ENCODE measurements at regions of chr1 and their contacts with region 1.

Region 1: GRCh38 chr1:94061513-94062443 is 59.2 kb downstream of the ABCA4 start:
- DNase-seq: peak; percentile 54
- ATAC-seq: peak; percentile 80
- H3K4me3 Mint-ChIP-seq: no peak overlapping the region
- H3K27ac Mint-ChIP-seq: no peak overlapping the region
- H3K4me1 Mint-ChIP-seq: no peaks in the 10 kb centered on the region
- H3K27me3 Mint-ChIP-seq: peaks cover 23% of the 10 kb centered on the region

Region 2: DNA sequence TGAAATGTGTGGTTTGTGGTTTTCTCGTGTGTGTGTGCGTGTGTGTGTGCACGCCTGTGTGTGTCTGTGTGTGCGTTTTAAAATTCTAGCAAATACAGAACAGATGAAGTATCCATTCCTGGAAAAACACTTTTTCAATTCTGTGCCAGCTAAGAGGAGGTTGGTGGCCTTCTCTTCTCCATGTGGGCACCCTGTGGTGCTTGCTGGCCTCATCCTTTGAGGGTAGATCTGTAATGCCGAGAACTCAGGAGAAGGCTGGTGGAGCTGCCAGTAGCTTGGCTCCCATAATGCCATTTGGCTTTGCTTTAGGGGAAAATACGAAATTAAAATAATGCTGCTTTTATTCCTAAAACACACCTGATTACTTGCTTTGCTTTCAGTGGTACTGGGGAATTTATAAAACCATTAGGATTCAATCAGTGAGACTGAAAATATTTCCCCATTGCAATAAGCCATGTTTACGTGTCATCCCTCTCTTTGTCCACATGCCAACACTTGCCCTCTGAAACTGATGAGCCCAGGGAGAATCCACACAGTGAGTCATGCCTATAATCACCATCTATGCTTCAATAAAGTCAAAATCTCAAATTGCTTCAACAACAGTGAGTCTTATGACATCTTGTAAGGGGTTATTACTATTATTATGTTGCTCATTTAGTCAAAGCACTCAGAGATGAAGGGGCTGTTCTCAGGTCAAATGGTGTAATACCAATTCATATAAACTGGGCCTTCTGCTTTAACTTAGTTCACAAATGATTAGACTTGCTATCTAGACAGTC is 20.0 kb after region 1 on chr1:
- CTCF ChIA-PET with region 1: interaction called, 10 read pairs
- POLR2A ChIA-PET with region 1: no interaction called
- DNase-seq: no peak
- ATAC-seq: no peak
- H3K4me3 Mint-ChIP-seq: no peak overlapping the region
- H3K27ac Mint-ChIP-seq: no peak overlapping the region
- H3K4me1 Mint-ChIP-seq: peaks cover 11% of the 10 kb centered on the region
- H3K27me3 Mint-ChIP-seq: peaks cover 28% of the 10 kb centered on the region

Region 3: DNA sequence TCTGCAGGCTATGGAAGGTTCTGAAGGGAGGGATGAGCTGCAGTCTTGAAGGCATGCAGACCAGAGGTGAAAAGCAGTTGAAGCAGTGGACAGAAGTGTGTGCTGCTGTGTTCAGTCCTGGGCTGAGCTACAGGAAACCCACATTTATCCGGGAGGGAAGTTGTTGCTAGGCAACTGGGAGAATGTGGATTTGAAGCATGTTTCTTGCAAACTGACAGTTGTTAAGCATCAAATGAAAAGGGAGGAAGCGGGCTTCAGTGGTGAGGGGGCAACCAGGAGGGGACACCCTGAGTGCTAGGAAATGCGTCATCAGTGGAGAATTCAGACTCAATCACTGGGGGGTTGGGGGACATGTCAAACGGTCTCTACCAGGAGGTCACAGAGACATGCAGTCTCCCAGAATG is 30.4 kb after region 1 on chr1:
- CTCF ChIA-PET with region 1: interaction called, 11 read pairs
- POLR2A ChIA-PET with region 1: no interaction called
- DNase-seq: peak; percentile 66
- ATAC-seq: peak; percentile 86
- H3K4me3 Mint-ChIP-seq: peak overlapping the region; percentile 13
- H3K27ac Mint-ChIP-seq: peak overlapping the region; percentile 79
- H3K4me1 Mint-ChIP-seq: peaks cover 43% of the 10 kb centered on the region
- H3K27me3 Mint-ChIP-seq: no peaks in the 10 kb centered on the region

Region 4: DNA sequence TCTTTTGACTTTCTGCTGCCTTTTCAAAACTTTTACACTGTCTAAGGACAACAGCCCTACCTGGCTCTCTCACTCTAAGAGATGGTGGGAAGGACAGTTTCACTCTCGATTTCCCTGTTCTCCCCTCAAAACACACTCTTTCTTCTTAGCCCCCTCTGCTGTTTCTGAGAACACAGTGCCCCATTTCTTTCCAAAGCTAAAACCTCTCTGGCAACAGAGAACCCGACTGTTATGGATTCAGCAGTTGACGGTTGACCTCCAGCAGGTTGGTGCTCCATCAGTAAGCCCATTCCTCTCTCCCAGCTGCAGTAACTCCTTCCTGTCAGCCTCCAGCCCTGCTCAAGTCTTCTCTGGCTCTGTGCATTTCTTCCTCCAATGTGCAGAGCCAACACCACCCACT is 268.2 kb after region 1 on chr1:
- CTCF ChIA-PET with region 1: interaction called, 64 read pairs
- POLR2A ChIA-PET with region 1: no interaction called
- DNase-seq: no peak
- ATAC-seq: no peak
- H3K4me3 Mint-ChIP-seq: no peak overlapping the region
- H3K27ac Mint-ChIP-seq: no peak overlapping the region
- H3K4me1 Mint-ChIP-seq: peaks cover 7% of the 10 kb centered on the region
- H3K27me3 Mint-ChIP-seq: peaks cover 25% of the 10 kb centered on the region

Region 5: GRCh38 chr1:94335950-94336349 is 274.2 kb after region 1 on chr1:
- CTCF ChIA-PET with region 1: interaction called, 64 read pairs
- POLR2A ChIA-PET with region 1: no interaction called
- DNase-seq: peak; percentile 50
- ATAC-seq: no peak
- H3K4me3 Mint-ChIP-seq: no peak overlapping the region
- H3K27ac Mint-ChIP-seq: no peak overlapping the region
- H3K4me1 Mint-ChIP-seq: no peaks in the 10 kb centered on the region
- H3K27me3 Mint-ChIP-seq: peaks cover 9% of the 10 kb centered on the region

Region 6: GRCh38 chr1:94379615-94380014 is 317.8 kb after region 1 on chr1:
- CTCF ChIA-PET with region 1: no interaction called
- POLR2A ChIA-PET with region 1: no interaction called
- DNase-seq: no peak
- ATAC-seq: no peak
- H3K4me3 Mint-ChIP-seq: no peak overlapping the region
- H3K27ac Mint-ChIP-seq: no peak overlapping the region
- H3K4me1 Mint-ChIP-seq: peaks cover 6% of the 10 kb centered on the region
- H3K27me3 Mint-ChIP-seq: peaks cover 7% of the 10 kb centered on the region

Region 7: GRCh38 chr1:94463765-94464330 is 402.1 kb after region 1 on chr1:
- CTCF ChIA-PET with region 1: interaction called, 16 read pairs
- POLR2A ChIA-PET with region 1: no interaction called
- DNase-seq: peak; percentile 25
- ATAC-seq: peak; percentile 44
- H3K4me3 Mint-ChIP-seq: no peak overlapping the region
- H3K27ac Mint-ChIP-seq: no peak overlapping the region
- H3K4me1 Mint-ChIP-seq: no peaks in the 10 kb centered on the region
- H3K27me3 Mint-ChIP-seq: no peaks in the 10 kb centered on the region

Measured in activated CD8-positive, alpha-beta T cell treated with anti-CD3 and anti-CD28 coated beads, Interleukin-2, amount 10 ng/mL, durations not matched to agents 7 days and 5 days (primary cell).